ENCODE measurements at regions of chr3 and their contacts with region 1.

Region 1: DNA sequence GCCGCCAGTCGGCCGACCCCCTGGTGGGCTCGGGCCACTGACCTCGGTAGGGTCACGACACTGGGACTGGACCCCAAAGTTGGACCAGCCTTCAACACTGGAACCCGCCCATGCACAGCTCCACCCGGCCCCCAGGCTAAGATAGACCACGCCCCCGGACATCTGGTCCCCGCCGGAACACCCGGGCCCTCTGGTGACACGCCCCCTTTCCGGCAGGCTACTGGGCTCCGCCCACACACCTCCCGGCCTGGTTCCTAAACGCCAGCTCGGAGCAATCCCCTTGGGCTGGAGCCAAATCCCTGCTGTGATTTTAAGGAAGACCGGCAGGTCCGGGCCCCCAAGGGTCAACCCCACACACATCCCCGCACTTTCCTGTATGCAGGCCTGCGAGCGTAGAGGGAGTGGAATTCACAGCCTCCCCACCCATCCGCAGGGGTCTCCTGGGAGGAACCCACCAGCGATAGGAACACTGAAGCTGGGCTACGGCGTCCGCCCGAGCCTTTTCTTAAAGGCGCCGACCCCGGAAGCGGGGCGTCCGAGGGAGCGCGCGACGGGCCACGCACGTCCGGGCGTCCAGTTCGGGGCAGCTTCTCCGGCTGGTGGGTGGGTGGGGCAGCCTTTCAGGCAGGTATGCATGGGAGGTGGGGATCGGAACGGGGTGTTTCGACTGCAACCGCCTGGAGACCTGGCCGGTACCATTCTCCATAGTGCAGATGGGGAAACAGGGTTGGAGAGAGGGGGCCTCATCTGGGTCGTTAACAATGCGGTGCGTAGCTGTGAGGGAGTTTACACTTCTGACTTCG is at the start of gene HEMK1:
- DNase-seq: peak; percentile 79 to 99
- H3K4me3 ChIP-seq: peak within 1 kb of the TSS; percentile 68 to 98 (median 77)
- H3K27ac ChIP-seq: peak within 1 kb of the TSS; percentile 65
- H3K4me1 ChIP-seq: peaks cover 0 to 6% (median 4%) of the 10 kb centered on the region in 4 experiments; a peak in 5 of 7 replicates
- H3K27me3 ChIP-seq: peaks cover 0 to 13% (median 5%) of the 10 kb centered on the region in 4 experiments; a peak in 4 of 7 replicates
- CTCF ChIP-seq: no peak
- EP300 ChIP-seq: no peak
- POLR2A ChIP-seq: peak in 1 of 2 experiments; percentile 25; a peak in 2 of 3 replicates
- RAD21 ChIP-seq: no peak
- total RNA-seq, gene HEMK1: 9.6 and 9.7 TPM in 2 replicates

Region 2: DNA sequence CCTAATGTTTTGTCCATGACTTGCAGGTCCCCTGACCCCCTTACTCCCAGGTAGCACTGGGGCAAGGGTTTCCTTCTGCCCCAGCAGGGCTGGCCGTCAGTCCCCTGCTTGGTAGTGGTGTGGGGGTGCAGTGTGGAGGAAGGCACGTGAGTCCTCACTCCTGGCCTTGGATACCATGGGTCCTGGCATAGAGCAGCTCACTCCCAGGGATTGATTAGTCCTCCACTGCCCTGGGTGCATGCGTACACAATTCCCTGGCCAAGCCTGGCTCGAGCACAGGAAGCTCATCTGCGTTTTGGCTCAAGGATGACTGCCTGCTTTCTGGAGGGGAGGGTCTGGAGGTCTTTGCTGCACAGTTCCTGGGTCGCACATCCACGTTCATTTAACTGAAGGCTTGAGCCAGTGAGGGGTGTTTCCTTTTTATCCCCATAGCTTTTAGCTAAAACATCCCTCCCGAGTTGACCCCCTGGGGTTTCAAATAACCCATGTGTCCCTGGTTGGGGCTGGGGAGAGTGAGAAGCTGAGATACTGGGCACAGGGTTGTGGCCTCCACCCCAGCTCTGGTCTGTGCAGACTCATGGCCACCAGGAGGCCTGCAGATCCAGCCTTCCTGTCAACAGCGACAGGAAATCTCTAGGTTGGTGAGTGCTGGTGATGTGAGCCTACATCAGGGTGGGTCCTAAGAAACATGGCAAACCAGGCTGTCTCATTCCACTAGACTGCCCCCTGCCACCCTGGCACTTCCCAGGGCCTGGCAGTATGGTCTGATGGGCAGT is 11.7 kb after region 1 on chr3:
- CTCF ChIA-PET with region 1: interaction called, 157 read pairs
- POLR2A ChIA-PET with region 1: interaction called, 12 read pairs
- DNase-seq: no peak
- H3K4me3 ChIP-seq: no peak overlapping the region
- H3K27ac ChIP-seq: no peak overlapping the region; the same call in 1 of the 2 replicates
- H3K4me1 ChIP-seq: no peaks in the 10 kb centered on the region
- H3K27me3 ChIP-seq: no peaks in the 10 kb centered on the region
- CTCF ChIP-seq: no peak
- EP300 ChIP-seq: no peak
- POLR2A ChIP-seq: no peak
- RAD21 ChIP-seq: no peak

Region 3: GRCh38 chr3:50587806-50588758 is 18.9 kb after region 1 on chr3:
- CTCF ChIA-PET with region 1: interaction called, 157 read pairs
- POLR2A ChIA-PET with region 1: interaction called, 12 read pairs
- DNase-seq: no peak
- H3K4me3 ChIP-seq: no peak overlapping the region
- H3K27ac ChIP-seq: no peak overlapping the region
- H3K4me1 ChIP-seq: no peaks in the 10 kb centered on the region
- H3K27me3 ChIP-seq: peaks cover 0 to 2% (median 0%) of the 10 kb centered on the region in 4 experiments; a peak in 1 of 7 replicates
- CTCF ChIP-seq: no peak
- EP300 ChIP-seq: no peak
- POLR2A ChIP-seq: no peak
- RAD21 ChIP-seq: no peak

Measured in H1 (cell line).